ENCODE measurements at regions of chr11 and their contacts with region 1.

Region 1: GRCh38 chr11:1782831-1783724 is 19.4 kb upstream of the CTSD start:
- DNase-seq: peak; percentile 95 to 97 (median 95)
- H3K4me3 ChIP-seq: peak overlapping the region in 1 of 3 experiments; percentile 46
- H3K4me3 Mint-ChIP-seq: peak overlapping the region; percentile 64 to 83
- H3K27ac ChIP-seq: peak overlapping the region; percentile 96 to 99
- H3K27ac Mint-ChIP-seq: peak overlapping the region; percentile 98 to 100 (median 98)
- H3K4me1 ChIP-seq: peaks cover 81 to 89% of the 10 kb centered on the region in 2 donors
- H3K4me1 Mint-ChIP-seq: peaks cover 92% of the 10 kb centered on the region
- H3K27me3 ChIP-seq: no peaks in the 10 kb centered on the region
- H3K27me3 Mint-ChIP-seq: peaks cover 2 to 12% (median 4%) of the 10 kb centered on the region in 3 donors
- CTCF ChIP-seq: no peak

Region 2: GRCh38 chr11:1749414-1750312 is 33.4 kb before region 1 on chr11:
- intact Hi-C with region 1: loop called in 1 of 2 experiments (anchors 5 kb)
- DNase-seq: no peak
- H3K4me3 ChIP-seq: peak overlapping the region in 1 of 3 experiments; percentile 20
- H3K4me3 Mint-ChIP-seq: peak overlapping the region; percentile 62 to 81
- H3K27ac ChIP-seq: no peak overlapping the region
- H3K27ac Mint-ChIP-seq: peak overlapping the region in 4 of 7 donors; percentile 10 to 51 (median 17)
- H3K4me1 ChIP-seq: peaks cover 34 to 82% of the 10 kb centered on the region in 2 donors
- H3K4me1 Mint-ChIP-seq: peaks cover 50% of the 10 kb centered on the region
- H3K27me3 ChIP-seq: peaks cover 7 to 33% of the 10 kb centered on the region in 2 donors
- H3K27me3 Mint-ChIP-seq: peaks cover 29 to 49% (median 43%) of the 10 kb centered on the region in 3 donors
- CTCF ChIP-seq: no peak

Region 3: DNA sequence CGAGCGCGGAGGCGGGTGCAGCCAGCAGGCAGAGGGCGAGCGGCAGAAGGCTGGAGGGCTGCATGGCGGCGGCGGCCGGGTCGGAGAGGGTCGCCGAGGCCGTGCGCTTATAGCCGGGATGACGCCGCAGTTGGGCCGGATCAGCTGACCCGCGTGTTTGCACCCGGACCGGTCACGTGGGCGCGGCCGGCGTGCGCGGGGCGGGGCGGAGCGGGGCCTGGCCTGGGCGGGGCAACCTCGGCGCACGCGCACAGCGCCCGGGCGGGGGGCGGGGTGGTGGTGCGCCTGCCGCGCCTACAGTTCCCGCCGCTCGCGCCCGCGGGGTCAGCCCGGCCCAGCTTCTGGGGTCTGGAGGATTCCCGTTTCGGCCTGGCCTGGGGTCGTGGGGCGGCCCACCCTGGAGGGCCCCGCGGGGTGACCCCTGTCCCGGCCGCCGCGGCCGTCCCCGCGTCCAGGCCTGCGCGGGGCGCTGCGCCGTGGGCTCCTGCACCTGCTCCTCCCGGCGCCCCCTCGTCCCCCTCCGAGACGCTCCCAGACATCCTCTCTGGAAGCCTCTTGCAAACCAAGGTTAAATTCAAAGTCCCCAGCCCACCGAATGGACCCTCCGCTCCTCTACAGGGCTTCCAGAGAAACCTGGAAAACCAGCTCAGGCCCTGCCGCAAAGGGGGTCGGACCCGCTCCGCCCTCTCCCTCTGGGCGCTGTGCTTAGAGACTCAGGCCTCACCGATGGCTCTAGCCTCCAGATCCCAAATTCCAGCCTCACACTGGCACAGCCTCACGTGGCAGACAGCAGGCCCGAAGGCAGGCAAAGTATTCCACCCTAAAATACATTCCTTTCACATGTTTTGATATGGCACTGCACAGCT is 19.0 kb before region 1 on chr11 and contains the start of gene CTSD:
- intact Hi-C with region 1: loop called in 1 of 2 experiments (anchors 2 kb)
- DNase-seq: peak; percentile 83 to 88 (median 84)
- H3K4me3 ChIP-seq: peak within 1 kb of the TSS; percentile 83 to 98 (median 90)
- H3K4me3 Mint-ChIP-seq: peak within 1 kb of the TSS; percentile 92 to 95
- H3K27ac ChIP-seq: peak within 1 kb of the TSS; percentile 95 to 97
- H3K27ac Mint-ChIP-seq: peak within 1 kb of the TSS; percentile 92 to 97 (median 96)
- H3K4me1 ChIP-seq: peaks cover 46 to 56% of the 10 kb centered on the region in 2 donors
- H3K4me1 Mint-ChIP-seq: peaks cover 43% of the 10 kb centered on the region
- H3K27me3 ChIP-seq: no peaks in the 10 kb centered on the region
- H3K27me3 Mint-ChIP-seq: peaks cover 0 to 3% (median 0%) of the 10 kb centered on the region in 3 donors
- CTCF ChIP-seq: no peak
- polyA plus RNA-seq, gene CTSD: 835 to 1,372 (median 855) TPM

Region 4: DNA sequence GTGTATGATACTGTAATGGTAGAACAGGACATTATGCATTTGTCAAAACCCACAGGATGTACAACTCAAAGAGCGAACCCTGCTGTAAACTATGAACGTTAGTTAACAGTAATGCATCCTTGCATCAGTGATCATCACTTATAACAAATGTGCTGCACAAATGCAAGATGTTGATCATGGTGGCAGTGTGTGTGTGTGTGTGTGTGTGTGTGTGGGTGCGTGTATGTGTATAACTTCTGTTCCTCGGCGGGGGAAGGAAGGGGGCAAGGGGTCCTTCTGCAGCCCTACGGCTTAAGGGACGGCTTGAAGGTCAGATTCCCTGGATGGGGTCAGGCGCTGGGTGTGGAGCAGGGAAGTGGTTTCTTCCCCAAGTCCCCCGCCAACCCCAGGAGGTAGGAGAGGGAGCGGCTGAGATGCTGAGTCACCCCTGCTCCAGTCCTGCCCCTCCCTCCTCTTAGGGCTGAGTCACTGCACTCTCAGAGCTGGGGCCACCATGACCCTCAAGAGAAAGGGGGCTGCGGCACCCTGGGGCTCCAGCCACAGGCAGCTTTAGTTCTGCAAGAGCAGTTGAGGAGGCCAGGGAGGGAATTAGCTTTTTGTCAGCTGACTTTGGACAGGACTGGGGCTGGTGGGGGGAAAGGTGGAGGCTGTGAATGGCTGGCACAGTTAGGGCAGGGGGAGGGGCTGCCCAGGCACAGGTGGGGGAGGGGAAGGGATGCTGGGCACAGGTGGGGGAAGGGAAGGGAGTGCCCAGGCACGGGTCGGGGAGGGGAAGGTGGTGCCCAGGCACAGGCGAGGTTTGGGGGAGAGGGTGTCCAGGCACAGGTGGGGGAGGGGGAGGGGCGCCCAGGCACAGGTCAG is 10.6 kb before region 1 on chr11:
- intact Hi-C with region 1: loop called in 1 of 2 experiments (anchors 1 kb)
- DNase-seq: peak; percentile 87 to 92 (median 90)
- H3K4me3 ChIP-seq: peak overlapping the region; percentile 3 to 71 (median 20)
- H3K4me3 Mint-ChIP-seq: peak overlapping the region; percentile 71 to 88
- H3K27ac ChIP-seq: peak overlapping the region; percentile 88 to 94
- H3K27ac Mint-ChIP-seq: peak overlapping the region; percentile 93 to 99 (median 98)
- H3K4me1 ChIP-seq: peaks cover 70 to 76% of the 10 kb centered on the region in 2 donors
- H3K4me1 Mint-ChIP-seq: peaks cover 69% of the 10 kb centered on the region
- H3K27me3 ChIP-seq: no peaks in the 10 kb centered on the region
- H3K27me3 Mint-ChIP-seq: peaks cover 0 to 3% (median 2%) of the 10 kb centered on the region in 3 donors
- CTCF ChIP-seq: no peak